Head of caudate nucleus (tissue), 42 donors: ENCODE measurements at regions of chr3 and their contacts with region 1.

Region 1: GRCh38 chr3:158727206-158728060 is 4.8 kb downstream of the RARRES1 start:
- DNase-seq: peak in 27 of 42 donors; percentile 21 to 83 (median 58)

Region 2: GRCh38 chr3:158488670-158489069 is 238.8 kb before region 1 on chr3:
- intact Hi-C with region 1: no loop called
- DNase-seq: no peak

Region 3: GRCh38 chr3:158539414-158540014 is 187.9 kb before region 1 on chr3:
- intact Hi-C with region 1: no loop called
- DNase-seq: peak in 20 of 42 donors; percentile 1 to 57 (median 20)

Region 4: DNA sequence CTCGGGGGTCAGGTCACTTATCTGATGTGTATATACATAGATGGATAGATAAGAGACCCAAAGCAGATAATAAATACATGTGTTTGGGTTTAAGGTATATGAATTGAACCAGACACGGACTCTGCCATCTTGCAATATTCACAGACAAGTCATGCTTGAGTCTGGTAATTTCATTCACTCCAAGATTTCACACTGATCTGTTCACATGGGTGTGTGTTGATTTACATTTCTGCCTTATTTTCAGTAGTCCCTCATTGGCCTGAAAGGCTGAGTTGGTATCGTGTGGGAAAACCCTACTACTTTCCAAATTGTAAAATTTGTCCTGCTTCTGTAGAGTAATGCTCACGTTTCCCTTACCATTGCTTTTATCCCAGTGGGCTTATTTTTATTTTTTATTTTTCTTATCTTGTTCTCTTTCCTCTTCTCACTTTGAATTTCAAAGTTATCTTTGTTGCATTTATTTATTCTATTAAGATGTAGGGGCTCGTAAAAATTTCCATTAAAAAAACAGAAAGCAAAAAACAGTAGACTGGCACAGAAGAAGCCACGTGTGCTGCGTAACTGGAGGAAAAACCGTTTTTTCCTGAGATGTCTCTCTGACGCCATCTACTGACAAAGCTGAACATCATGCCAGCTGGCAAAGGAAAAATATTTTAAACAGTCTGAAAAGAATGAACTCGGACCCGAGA is 63.6 kb after region 1 on chr3:
- intact Hi-C with region 1: loop called (anchors 5 kb)
- DNase-seq: peak in 24 of 42 donors; percentile 21 to 75 (median 47)